ENCODE measurements at regions of chr5 and their contacts with region 1.

Region 1: DNA sequence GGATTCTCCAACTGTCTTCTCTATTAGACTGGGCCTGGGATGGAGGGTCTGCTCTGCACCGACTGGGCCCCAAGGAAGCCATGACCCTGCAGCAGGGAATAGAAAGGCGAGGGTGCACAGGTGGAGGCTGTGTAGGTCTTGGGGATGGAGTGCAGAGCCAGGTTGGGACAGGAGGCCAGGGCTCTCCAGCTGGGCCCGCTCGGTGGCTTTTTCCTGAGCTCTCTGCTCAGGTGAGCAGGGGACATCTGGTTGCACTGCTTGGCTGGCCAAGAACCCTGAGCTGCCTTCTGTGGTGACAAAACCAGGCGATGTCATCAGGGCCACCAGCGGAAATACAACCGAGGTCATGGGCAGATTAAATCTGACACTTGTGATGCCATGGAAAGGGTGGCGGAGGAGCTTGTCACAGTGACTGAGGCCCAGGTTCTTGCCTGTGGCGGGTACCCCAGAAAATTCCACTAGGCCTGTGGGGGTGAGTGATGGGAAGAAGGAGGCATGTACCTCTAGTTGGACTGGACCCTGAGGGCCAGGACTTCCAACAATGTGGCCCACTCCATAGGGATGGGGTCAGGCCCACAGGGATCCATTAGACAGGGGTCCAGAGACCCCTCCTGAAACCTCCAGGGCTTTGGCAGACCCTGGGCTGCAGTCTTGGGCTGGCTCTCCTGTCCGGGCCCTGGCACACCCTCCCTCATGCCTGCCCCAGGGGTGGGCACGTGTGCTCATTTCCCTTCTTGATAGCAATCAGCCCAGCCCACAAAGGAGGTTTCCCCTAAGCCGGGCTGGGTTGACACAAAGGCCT is 4.4 kb upstream of the IL3 start:
- DNase-seq: peak; percentile 30 to 80 (median 55)
- ATAC-seq: peak; percentile 72
- H3K4me3 ChIP-seq: no peak overlapping the region
- H3K4me3 Mint-ChIP-seq: no peak overlapping the region
- H3K27ac ChIP-seq: peak overlapping the region in 1 of 2 experiments; percentile 74
- H3K27ac Mint-ChIP-seq: peak overlapping the region; percentile 76
- H3K4me1 ChIP-seq: peaks cover 22% of the 10 kb centered on the region
- H3K4me1 Mint-ChIP-seq: peaks cover 41% of the 10 kb centered on the region
- H3K27me3 ChIP-seq: no peaks in the 10 kb centered on the region
- H3K27me3 Mint-ChIP-seq: no peaks in the 10 kb centered on the region
- CTCF ChIP-seq: no peak

Region 2: DNA sequence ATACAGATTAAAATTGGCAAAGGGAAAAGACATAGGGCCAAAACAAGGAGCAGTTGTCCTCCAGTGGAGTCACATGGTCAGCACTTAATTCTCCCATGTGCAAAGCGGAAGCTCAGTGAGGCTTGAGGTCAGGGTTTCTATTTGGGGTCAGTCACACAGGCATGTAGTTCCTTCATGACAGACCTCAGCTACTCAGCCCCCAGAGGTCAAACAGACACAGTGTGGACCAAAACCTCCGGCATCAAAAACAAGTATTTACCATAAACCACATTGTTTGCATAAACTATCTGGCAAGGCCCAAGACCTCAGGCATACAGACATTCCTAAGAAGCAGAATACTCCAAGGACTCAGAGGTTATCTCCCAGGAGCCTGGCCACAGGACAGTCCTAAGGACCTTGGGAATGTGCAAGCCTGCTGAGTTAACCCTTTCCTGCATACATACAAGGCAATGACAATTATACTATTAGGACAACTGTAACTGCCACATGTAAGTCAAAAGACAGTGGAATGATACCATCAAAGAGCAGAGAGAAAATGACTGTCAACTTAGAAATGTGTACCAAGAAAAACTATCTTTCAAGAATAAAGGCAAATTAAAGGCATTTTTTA is 230.5 kb before region 1 on chr5:
- CTCF ChIA-PET with region 1: no interaction called
- POLR2A ChIA-PET with region 1: no interaction called
- intact Hi-C with region 1: no loop called
- DNase-seq: no peak
- ATAC-seq: no peak
- H3K4me3 ChIP-seq: no peak overlapping the region
- H3K4me3 Mint-ChIP-seq: no peak overlapping the region
- H3K27ac ChIP-seq: no peak overlapping the region
- H3K27ac Mint-ChIP-seq: no peak overlapping the region
- H3K4me1 ChIP-seq: no peaks in the 10 kb centered on the region
- H3K4me1 Mint-ChIP-seq: peaks cover 5% of the 10 kb centered on the region
- H3K27me3 ChIP-seq: no peaks in the 10 kb centered on the region
- H3K27me3 Mint-ChIP-seq: peaks cover 2% of the 10 kb centered on the region
- CTCF ChIP-seq: no peak

Region 3: DNA sequence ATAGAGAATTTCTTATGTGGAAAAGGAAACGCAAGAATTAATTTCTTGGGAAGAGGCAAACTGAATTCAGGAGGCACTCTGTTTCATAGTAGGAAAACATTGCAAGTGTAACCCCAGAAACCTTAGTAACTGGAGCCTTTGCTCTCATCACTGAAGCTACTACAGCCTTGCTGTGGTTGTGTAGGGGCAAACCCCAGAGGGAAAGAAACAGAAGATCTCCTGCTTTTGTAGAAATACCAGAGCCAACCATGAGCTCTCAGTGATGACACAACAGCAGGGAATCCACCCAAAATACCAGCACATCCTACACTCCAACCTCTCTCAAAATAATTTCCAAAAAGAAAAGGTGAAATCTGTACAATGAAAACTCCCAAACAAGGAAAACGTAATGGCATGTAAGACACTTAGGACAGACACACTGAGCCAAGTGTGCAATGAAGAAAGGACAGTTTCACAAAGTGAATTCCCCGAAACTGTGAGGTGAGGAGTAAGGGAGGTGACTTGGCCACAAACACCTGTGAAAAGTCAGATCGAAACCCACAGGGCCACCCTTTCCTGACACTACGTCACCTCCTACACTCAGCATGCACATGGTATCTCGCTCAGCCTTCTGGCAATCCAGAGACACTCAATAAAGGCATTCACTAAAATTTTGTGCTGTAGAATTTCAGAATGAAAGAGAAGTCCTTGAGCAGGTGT is 36.0 kb before region 1 on chr5:
- CTCF ChIA-PET with region 1: no interaction called
- POLR2A ChIA-PET with region 1: no interaction called
- intact Hi-C with region 1: loop called (anchors 5 kb)
- DNase-seq: peak; percentile 26 to 94 (median 61)
- ATAC-seq: peak; percentile 93
- H3K4me3 ChIP-seq: no peak overlapping the region
- H3K4me3 Mint-ChIP-seq: peak overlapping the region; percentile 11
- H3K27ac ChIP-seq: peak overlapping the region in 1 of 2 experiments; percentile 57
- H3K27ac Mint-ChIP-seq: peak overlapping the region; percentile 86
- H3K4me1 ChIP-seq: peaks cover 27% of the 10 kb centered on the region
- H3K4me1 Mint-ChIP-seq: peaks cover 40% of the 10 kb centered on the region
- H3K27me3 ChIP-seq: no peaks in the 10 kb centered on the region
- H3K27me3 Mint-ChIP-seq: peaks cover 6% of the 10 kb centered on the region
- CTCF ChIP-seq: no peak

Region 4: DNA sequence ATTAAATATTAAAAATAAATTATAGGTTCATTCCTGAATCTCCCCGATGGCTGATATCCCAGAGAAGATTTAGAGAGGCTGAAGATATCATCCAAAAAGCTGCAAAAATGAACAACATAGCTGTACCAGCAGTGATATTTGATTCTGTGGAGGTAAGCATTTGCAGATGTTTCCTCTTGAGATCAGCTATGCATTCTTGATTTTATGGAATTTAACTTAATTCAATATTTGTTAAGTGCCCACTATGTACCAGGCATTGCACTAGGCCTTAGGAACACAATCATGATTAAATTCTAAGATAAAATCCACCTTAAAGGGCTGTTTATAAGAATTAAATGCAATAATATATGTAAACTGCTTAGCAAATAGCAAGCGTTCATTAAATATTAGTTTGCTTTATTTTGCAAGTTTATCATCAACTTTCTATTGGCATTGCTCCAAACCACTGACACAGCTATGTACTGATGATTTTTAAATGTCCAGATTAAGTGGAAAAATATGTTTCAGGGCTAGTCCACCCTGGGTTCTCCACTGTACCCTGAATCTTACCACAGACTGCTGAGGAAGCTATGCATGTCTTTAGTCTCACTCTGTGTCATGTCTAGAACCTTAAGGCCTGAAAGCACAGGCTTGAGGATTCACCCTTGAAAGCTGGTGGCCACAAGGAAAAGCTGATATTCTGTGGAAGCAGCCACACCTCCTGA is 271.4 kb after region 1 on chr5:
- CTCF ChIA-PET with region 1: no interaction called
- POLR2A ChIA-PET with region 1: no interaction called
- intact Hi-C with region 1: no loop called
- DNase-seq: no peak
- ATAC-seq: no peak
- H3K4me3 ChIP-seq: no peak overlapping the region
- H3K4me3 Mint-ChIP-seq: no peak overlapping the region
- H3K27ac ChIP-seq: no peak overlapping the region
- H3K27ac Mint-ChIP-seq: no peak overlapping the region
- H3K4me1 ChIP-seq: no peaks in the 10 kb centered on the region
- H3K4me1 Mint-ChIP-seq: no peaks in the 10 kb centered on the region
- H3K27me3 ChIP-seq: no peaks in the 10 kb centered on the region
- H3K27me3 Mint-ChIP-seq: no peaks in the 10 kb centered on the region
- CTCF ChIP-seq: no peak